ENCODE measurements at regions of chr19 and their contacts with region 1.

Region 1: GRCh38 chr19:18419195-18419698 is at the start of gene SSBP4:
- DNase-seq: peak; percentile 70
- H3K4me3 ChIP-seq: peak within 1 kb of the TSS; percentile 14 to 66 (median 27)
- H3K27ac ChIP-seq: peak within 1 kb of the TSS; percentile 5 to 90 (median 90)
- H3K4me1 ChIP-seq: peaks cover 44 to 68% of the 10 kb centered on the region in 2 donors
- H3K27me3 ChIP-seq: no peaks in the 10 kb centered on the region
- CTCF ChIP-seq: peak in 3 of 6 experiments; percentile 49 to 56 (median 53)
- POLR2A ChIP-seq: peak in 1 of 2 donors; percentile 70
- total RNA-seq, gene SSBP4: 40.5 to 75.6 (median 56.1) TPM

Region 2: GRCh38 chr19:18192673-18193387 is 226.4 kb before region 1 on chr19 and contains the start of gene MPV17L2:
- intact Hi-C with region 1: no loop called
- DNase-seq: peak; percentile 100
- H3K4me3 ChIP-seq: peak within 1 kb of the TSS; percentile 32 to 91 (median 41)
- H3K27ac ChIP-seq: peak within 1 kb of the TSS; percentile 97 to 99 (median 99)
- H3K4me1 ChIP-seq: peaks cover 17 to 18% of the 10 kb centered on the region in 2 donors
- H3K27me3 ChIP-seq: no peaks in the 10 kb centered on the region
- CTCF ChIP-seq: no peak
- POLR2A ChIP-seq: peak; percentile 74 to 86
- total RNA-seq, gene MPV17L2: 4.7 to 57.7 (median 29.3) TPM

Region 3: DNA sequence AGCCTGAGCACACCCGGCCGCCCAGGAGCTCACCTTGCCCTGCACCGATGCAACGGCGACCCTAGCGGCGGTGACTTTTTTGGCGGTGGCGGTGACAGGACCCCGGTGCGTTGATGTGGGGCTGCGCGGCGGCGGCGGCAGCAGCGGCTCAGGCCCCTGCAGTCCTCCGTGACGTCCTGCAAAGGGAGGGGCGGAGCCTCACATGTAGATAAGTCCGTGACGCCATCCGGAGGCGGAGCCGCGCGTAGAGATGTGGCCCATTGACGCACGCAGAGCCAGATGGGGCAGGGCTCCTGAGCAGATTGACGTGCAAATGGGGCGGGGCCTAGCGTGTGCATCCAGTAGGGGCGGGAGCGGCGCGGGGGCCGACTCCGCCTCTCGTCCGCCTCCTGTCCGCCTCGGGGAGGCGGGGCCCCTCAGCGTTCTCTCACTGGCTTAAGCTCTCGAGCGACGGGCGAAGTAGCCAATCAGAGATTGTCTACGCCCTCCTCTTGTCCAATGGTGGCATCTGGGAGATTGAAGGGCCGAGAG is 215.3 kb before region 1 on chr19 and contains the start of gene RAB3A:
- intact Hi-C with region 1: loop called (anchors 10 kb)
- DNase-seq: peak; percentile 100
- H3K4me3 ChIP-seq: peak within 1 kb of the TSS; percentile 46 to 72 (median 63)
- H3K27ac ChIP-seq: peak within 1 kb of the TSS; percentile 93 to 99 (median 97)
- H3K4me1 ChIP-seq: peaks cover 17 to 19% of the 10 kb centered on the region in 2 donors
- H3K27me3 ChIP-seq: no peaks in the 10 kb centered on the region
- CTCF ChIP-seq: no peak
- POLR2A ChIP-seq: peak in 1 of 2 donors; percentile 74
- total RNA-seq, gene RAB3A: 0.40 to 2.5 (median 2.0) TPM in 3 of 4 donors, not detected in the other

Region 4: GRCh38 chr19:18251587-18252369 is 167.5 kb before region 1 on chr19:
- intact Hi-C with region 1: loop called (anchors 10 kb)
- DNase-seq: peak; percentile 66 to 72
- H3K4me3 ChIP-seq: no peak overlapping the region
- H3K27ac ChIP-seq: no peak overlapping the region
- H3K4me1 ChIP-seq: peaks cover 21 to 39% of the 10 kb centered on the region in 2 donors
- H3K27me3 ChIP-seq: no peaks in the 10 kb centered on the region
- CTCF ChIP-seq: peak; percentile 93 to 97 (median 94)
- POLR2A ChIP-seq: no peak

Region 5: DNA sequence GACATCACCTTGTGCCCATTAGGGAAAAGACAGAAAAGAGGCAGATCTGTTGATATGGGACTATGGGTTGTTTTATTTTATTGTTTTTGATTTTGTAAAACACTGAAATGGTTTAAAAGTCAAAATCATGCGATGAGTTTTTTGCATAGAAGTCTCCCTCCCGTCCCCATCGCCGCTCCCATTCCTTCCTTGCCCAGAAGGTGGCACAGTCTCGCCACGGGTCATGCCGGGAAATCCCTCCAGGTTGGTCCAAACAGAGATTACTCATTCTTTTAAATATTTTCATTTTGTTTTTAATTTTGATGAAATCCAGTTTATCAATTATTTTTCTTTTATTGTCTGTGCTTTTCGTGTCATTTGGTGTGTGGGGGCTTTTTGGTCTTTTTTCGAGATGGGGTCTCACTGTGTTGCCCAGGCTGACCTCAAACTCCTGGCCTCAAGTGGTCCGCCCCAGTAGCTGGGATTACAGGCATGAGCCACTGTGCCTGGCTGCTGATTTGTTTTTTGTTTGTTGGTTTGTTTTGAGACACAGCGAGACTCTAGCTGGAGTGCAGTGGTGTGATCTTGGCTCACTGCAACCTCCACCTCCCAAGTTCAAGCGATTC is 69.6 kb before region 1 on chr19:
- intact Hi-C with region 1: loop called (anchors 5 kb)
- DNase-seq: peak; percentile 49 to 69
- H3K4me3 ChIP-seq: no peak overlapping the region
- H3K27ac ChIP-seq: no peak overlapping the region
- H3K4me1 ChIP-seq: no peaks in the 10 kb centered on the region
- H3K27me3 ChIP-seq: no peaks in the 10 kb centered on the region
- CTCF ChIP-seq: peak in 5 of 6 experiments; percentile 64 to 77 (median 75)
- POLR2A ChIP-seq: no peak